Aorta (tissue), 5 donors: ENCODE measurements at regions of chr20 and their contacts with region 1.

Region 1: GRCh38 chr20:4297127-4297826 is 281.9 kb upstream of the RNF24 start:
- DNase-seq: peak; percentile 74 to 86
- ATAC-seq: peak; percentile 82
- H3K4me3 ChIP-seq: no peak overlapping the region
- H3K27ac ChIP-seq: peak overlapping the region in 1 of 2 donors; percentile 60
- H3K4me1 ChIP-seq: no peaks in the 10 kb centered on the region
- H3K27me3 ChIP-seq: no peaks in the 10 kb centered on the region

Region 2: GRCh38 chr20:4283016-4283415 is 14.3 kb before region 1 on chr20:
- intact Hi-C with region 1: no loop called
- DNase-seq: no peak
- ATAC-seq: no peak
- H3K4me3 ChIP-seq: no peak overlapping the region
- H3K27ac ChIP-seq: no peak overlapping the region
- H3K4me1 ChIP-seq: no peaks in the 10 kb centered on the region
- H3K27me3 ChIP-seq: no peaks in the 10 kb centered on the region

Region 3: DNA sequence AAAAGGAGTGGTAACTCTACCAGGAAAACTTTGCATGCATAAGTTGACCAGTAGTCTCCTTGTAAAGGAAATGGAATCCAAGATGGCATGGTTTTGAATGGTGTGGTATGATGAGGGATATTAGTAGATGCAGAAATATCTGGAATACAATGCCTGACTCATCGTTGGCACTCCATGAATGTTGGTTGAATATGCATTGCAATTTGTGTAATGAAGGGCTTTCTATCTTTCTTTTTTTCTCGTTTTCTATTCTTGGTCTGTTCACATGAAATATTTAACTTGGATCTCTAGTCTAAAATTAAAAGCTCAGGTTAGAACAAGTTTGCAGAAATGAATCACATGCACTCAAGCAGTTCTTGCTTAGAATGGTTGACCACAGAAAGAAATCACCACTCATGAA is 147.1 kb after region 1 on chr20:
- intact Hi-C with region 1: loop called in 1 of 2 experiments (anchors 5 kb)
- DNase-seq: no peak
- ATAC-seq: peak; percentile 20
- H3K4me3 ChIP-seq: no peak overlapping the region
- H3K27ac ChIP-seq: peak overlapping the region; percentile 20 to 30
- H3K4me1 ChIP-seq: peaks cover 6 to 7% of the 10 kb centered on the region in 2 donors
- H3K27me3 ChIP-seq: no peaks in the 10 kb centered on the region

Region 4: GRCh38 chr20:4684837-4685413 is 387.6 kb after region 1 on chr20:
- intact Hi-C with region 1: no loop called
- DNase-seq: no peak
- ATAC-seq: no peak
- H3K4me3 ChIP-seq: no peak overlapping the region
- H3K27ac ChIP-seq: no peak overlapping the region
- H3K4me1 ChIP-seq: no peaks in the 10 kb centered on the region
- H3K27me3 ChIP-seq: no peaks in the 10 kb centered on the region